Activated CD4-positive, alpha-beta T cell treated with anti-CD3 and anti-CD28 coated beads for 36 hours (primary cell): ENCODE measurements at regions of chr6 and their contacts with region 1.

Region 1: GRCh38 chr6:30678964-30679726 is 6.3 kb upstream of the DHX16 start:
- DNase-seq: peak; percentile 96
- ATAC-seq: peak; percentile 37
- H3K4me3 Mint-ChIP-seq: peak overlapping the region; percentile 100
- H3K27ac Mint-ChIP-seq: peak overlapping the region; percentile 97
- H3K4me1 Mint-ChIP-seq: peaks cover 23% of the 10 kb centered on the region
- H3K27me3 Mint-ChIP-seq: no peaks in the 10 kb centered on the region

Region 2: DNA sequence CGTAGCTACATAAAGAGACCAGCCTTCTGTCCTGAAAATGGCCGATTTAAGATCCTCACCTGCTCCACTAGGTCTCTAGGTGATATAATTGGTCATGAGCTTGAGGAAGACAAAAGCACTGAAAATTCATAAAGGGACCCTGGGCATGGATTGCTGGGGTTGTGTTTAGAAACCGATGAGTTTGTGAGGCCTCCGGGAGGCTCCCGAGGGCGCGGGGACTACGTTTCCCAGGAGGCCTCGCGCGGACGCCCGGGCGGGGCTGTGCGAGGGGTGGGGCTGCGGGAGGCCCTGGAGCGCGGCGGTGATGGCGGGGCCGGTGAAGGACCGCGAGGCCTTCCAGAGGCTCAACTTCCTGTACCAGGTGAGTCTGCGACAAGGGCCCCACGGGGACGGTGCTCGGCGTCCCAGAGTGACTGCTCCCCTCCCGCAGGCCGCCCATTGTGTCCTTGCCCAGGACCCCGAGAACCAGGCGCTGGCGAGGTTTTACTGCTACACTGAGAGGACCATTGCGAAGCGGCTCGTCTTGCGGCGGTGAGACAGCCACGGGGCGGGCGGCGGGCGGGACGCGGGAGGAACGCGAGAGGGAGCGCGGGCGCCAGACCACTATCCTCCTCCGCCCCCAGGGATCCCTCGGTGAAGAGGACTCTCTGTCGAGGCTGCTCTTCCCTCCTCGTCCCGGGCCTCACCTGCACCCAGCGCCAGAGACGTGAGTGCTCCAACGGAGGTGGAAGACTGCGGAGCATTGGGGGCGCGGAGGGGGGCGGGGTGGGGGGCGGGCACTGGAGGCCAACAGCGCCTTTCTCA is 334.1 kb before region 1 on chr6 and contains the start of gene RPP21:
- CTCF ChIA-PET with region 1: no interaction called
- POLR2A ChIA-PET with region 1: no interaction called
- intact Hi-C with region 1: loop called in 1 of 2 experiments (anchors 5 kb)
- DNase-seq: peak; percentile 94
- ATAC-seq: peak; percentile 96
- H3K4me3 Mint-ChIP-seq: peak within 1 kb of the TSS; percentile 85
- H3K27ac Mint-ChIP-seq: peak within 1 kb of the TSS; percentile 84
- H3K4me1 Mint-ChIP-seq: peaks cover 41% of the 10 kb centered on the region
- H3K27me3 Mint-ChIP-seq: peaks cover 2% of the 10 kb centered on the region
- total RNA-seq, gene RPP21: 32.6 to 38.1 TPM

Region 3: GRCh38 chr6:30515932-30516753 is 163.0 kb before region 1 on chr6:
- CTCF ChIA-PET with region 1: no interaction called
- POLR2A ChIA-PET with region 1: no interaction called
- intact Hi-C with region 1: loop called in 1 of 2 experiments (anchors 1 kb)
- DNase-seq: peak; percentile 96
- ATAC-seq: peak; percentile 87
- H3K4me3 Mint-ChIP-seq: peak overlapping the region; percentile 74
- H3K27ac Mint-ChIP-seq: peak overlapping the region; percentile 98
- H3K4me1 Mint-ChIP-seq: peaks cover 69% of the 10 kb centered on the region
- H3K27me3 Mint-ChIP-seq: no peaks in the 10 kb centered on the region

Region 4: DNA sequence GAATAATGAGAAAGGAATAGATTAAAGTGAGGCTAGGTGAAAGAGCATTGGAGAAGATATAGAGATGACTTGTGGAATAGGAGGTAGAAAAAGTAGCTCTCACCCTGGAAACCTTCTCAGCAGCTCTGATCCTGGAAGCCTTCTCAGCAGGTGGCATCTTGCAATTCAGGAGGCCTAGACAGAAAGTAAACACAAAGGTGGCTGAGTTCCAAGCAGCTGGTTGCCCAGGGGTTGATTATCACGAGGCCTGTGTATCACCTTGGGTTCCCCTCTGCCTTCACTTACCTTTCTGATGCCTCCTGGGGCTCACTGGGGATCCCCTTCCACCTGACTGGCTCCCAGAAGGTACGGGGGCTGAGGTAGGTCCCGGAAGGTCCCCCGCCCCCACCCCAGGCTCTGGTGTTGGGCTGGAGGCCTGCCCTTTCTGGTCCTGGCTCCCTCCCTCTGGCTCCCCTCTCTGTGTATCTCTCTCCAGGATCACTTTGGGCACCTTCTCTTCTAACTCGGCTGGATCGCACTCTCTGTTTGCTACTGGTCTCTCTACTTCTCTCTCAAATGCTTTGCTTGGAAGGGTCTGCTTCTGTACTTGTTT is 28.2 kb after region 1 on chr6:
- CTCF ChIA-PET with region 1: interaction called, 5 read pairs
- POLR2A ChIA-PET with region 1: interaction called, 10 read pairs
- intact Hi-C with region 1: no loop called
- DNase-seq: no peak
- ATAC-seq: no peak
- H3K4me3 Mint-ChIP-seq: no peak overlapping the region
- H3K27ac Mint-ChIP-seq: no peak overlapping the region
- H3K4me1 Mint-ChIP-seq: peaks cover 5% of the 10 kb centered on the region
- H3K27me3 Mint-ChIP-seq: no peaks in the 10 kb centered on the region

Region 5: GRCh38 chr6:30814136-30815040 is 135.2 kb after region 1 on chr6:
- CTCF ChIA-PET with region 1: no interaction called
- POLR2A ChIA-PET with region 1: interaction called, 3 read pairs
- intact Hi-C with region 1: loop called in 1 of 2 experiments (anchors 2 kb)
- DNase-seq: peak; percentile 79
- ATAC-seq: peak; percentile 40
- H3K4me3 Mint-ChIP-seq: peak overlapping the region; percentile 38
- H3K27ac Mint-ChIP-seq: peak overlapping the region; percentile 96
- H3K4me1 Mint-ChIP-seq: peaks cover 91% of the 10 kb centered on the region
- H3K27me3 Mint-ChIP-seq: no peaks in the 10 kb centered on the region

Region 6: GRCh38 chr6:30926644-30927043 is 247.5 kb after region 1 on chr6:
- CTCF ChIA-PET with region 1: no interaction called
- POLR2A ChIA-PET with region 1: no interaction called
- intact Hi-C with region 1: no loop called
- DNase-seq: no peak
- ATAC-seq: no peak
- H3K4me3 Mint-ChIP-seq: no peak overlapping the region
- H3K27ac Mint-ChIP-seq: no peak overlapping the region
- H3K4me1 Mint-ChIP-seq: no peaks in the 10 kb centered on the region
- H3K27me3 Mint-ChIP-seq: no peaks in the 10 kb centered on the region

Region 7: GRCh38 chr6:31087494-31088089 is 408.4 kb after region 1 on chr6:
- CTCF ChIA-PET with region 1: interaction called, 5 read pairs
- POLR2A ChIA-PET with region 1: no interaction called
- intact Hi-C with region 1: loop called in 1 of 2 experiments (anchors 5 kb)
- DNase-seq: peak; percentile 94
- ATAC-seq: peak; percentile 96
- H3K4me3 Mint-ChIP-seq: no peak overlapping the region
- H3K27ac Mint-ChIP-seq: no peak overlapping the region
- H3K4me1 Mint-ChIP-seq: peaks cover 13% of the 10 kb centered on the region
- H3K27me3 Mint-ChIP-seq: no peaks in the 10 kb centered on the region